CD8-positive, alpha-beta memory T cell (primary cell): ENCODE measurements at regions of chr12 and their contacts with region 1.

Region 1: GRCh38 chr12:121668750-121669520 is 519 bp downstream of the MORN3 start:
- DNase-seq: peak; percentile 24 to 70 (median 32)
- H3K4me3 ChIP-seq: no peak overlapping the region
- H3K4me3 Mint-ChIP-seq: peak overlapping the region in 4 of 7 donors; percentile 28 to 77 (median 52)
- H3K27ac ChIP-seq: no peak overlapping the region
- H3K27ac Mint-ChIP-seq: peak overlapping the region; percentile 68 to 100 (median 84)
- H3K4me1 ChIP-seq: peaks cover 69% of the 10 kb centered on the region
- H3K4me1 Mint-ChIP-seq: peaks cover 51 to 72% (median 59%) of the 10 kb centered on the region in 3 donors
- H3K27me3 ChIP-seq: no peaks in the 10 kb centered on the region
- H3K27me3 Mint-ChIP-seq: peaks cover 0 to 13% of the 10 kb centered on the region in 2 donors

Region 2: DNA sequence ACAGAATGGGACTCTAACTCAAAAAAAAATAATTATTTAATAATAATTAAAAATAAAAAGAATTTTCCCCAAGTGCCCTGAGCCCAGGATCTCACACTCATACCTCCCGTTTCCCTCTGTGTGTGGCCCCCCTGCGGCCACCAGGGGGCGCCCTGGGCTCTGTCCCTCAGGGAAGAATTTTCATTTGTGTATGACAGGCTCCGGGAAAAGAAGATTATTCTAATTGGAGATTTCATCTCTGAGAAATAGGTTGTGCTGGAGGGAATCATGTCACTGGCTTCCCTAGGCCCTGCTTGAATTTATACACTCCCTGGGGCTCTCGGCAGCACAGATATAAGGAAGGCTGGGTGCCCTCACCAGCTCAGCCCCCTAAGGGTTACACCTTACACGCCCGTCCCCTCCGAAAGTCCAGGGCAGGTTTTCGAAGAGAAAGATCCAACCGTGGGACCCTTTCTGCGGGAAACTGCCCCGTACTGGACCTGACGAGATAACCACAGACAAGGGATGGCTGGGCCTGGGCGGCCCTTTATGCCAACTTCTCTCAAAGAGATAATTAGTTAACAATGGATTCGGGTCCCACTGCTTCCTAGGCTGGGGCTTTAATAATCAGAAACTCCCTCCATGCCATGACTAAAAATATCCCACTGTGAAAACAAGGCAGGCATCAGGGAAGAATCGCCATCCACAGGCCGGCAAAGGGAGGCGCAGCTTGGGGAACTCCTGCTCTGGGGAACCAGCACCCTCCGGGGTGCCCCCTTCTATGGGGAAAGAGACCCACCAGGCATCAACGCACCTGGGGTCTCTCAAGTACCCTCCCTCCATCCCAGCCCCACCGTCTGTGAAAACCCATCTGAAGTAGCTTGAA is 168.8 kb before region 1 on chr12:
- CTCF ChIA-PET with region 1: interaction called, 13 read pairs
- POLR2A ChIA-PET with region 1: no interaction called
- DNase-seq: peak; percentile 61 to 81 (median 67)
- H3K4me3 ChIP-seq: no peak overlapping the region
- H3K4me3 Mint-ChIP-seq: no peak overlapping the region
- H3K27ac ChIP-seq: no peak overlapping the region
- H3K27ac Mint-ChIP-seq: peak overlapping the region in 4 of 8 donors; percentile 19 to 94 (median 73)
- H3K4me1 ChIP-seq: peaks cover 10% of the 10 kb centered on the region
- H3K4me1 Mint-ChIP-seq: peaks cover 28 to 55% (median 32%) of the 10 kb centered on the region in 3 donors
- H3K27me3 ChIP-seq: no peaks in the 10 kb centered on the region
- H3K27me3 Mint-ChIP-seq: no peaks in the 10 kb centered on the region

Region 3: DNA sequence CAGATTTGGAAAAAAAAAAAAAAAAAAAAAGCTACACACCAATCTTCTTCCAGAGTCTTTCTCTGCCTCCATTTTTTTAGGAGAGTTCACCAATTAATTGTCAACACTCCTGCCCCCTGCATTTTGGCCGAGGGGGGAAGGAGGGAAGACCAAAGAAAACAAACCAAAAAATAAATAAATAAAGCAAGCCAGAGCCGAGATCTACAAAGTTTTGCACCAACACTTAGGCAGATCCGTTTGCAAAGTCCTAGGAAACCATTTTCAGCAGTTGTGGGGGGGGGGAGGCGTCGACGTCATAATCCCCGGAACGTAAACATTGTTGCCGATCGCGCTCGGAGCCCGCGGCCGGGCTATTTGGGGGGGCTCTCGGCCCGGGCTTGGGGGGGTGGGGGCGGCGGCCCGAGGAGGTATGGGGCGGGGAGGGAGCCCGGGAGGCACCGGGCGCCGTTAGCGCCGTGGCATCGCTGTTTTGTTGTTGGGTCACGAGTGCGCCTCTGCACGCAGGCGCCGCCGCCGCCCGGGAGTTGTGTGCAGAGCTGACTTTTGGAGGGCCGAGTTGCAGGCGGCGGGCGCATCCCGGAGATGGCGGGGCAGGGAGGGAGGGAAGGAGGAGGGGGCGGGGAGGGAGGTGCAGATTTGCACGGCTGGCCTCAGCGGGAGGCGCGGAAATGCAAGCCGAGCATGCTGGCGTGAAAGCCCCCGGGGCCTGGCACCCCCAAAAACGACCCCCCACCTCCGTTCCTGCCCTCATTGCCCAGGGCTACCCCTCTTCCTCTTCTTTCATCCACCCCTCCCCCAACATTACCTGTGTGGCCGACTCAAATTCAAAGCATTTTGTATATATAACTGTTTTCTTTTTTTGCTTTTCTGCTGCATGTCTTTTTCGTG is 88.7 kb before region 1 on chr12:
- CTCF ChIA-PET with region 1: interaction called, 11 read pairs
- POLR2A ChIA-PET with region 1: interaction called, 24 read pairs
- DNase-seq: peak; percentile 72 to 89 (median 73)
- H3K4me3 ChIP-seq: peak overlapping the region; percentile 97
- H3K4me3 Mint-ChIP-seq: peak overlapping the region; percentile 95 to 99 (median 98)
- H3K27ac ChIP-seq: peak overlapping the region; percentile 93
- H3K27ac Mint-ChIP-seq: peak overlapping the region; percentile 97 to 100 (median 99)
- H3K4me1 ChIP-seq: peaks cover 41% of the 10 kb centered on the region
- H3K4me1 Mint-ChIP-seq: peaks cover 41 to 73% (median 48%) of the 10 kb centered on the region in 3 donors
- H3K27me3 ChIP-seq: no peaks in the 10 kb centered on the region
- H3K27me3 Mint-ChIP-seq: no peaks in the 10 kb centered on the region

Region 4: DNA sequence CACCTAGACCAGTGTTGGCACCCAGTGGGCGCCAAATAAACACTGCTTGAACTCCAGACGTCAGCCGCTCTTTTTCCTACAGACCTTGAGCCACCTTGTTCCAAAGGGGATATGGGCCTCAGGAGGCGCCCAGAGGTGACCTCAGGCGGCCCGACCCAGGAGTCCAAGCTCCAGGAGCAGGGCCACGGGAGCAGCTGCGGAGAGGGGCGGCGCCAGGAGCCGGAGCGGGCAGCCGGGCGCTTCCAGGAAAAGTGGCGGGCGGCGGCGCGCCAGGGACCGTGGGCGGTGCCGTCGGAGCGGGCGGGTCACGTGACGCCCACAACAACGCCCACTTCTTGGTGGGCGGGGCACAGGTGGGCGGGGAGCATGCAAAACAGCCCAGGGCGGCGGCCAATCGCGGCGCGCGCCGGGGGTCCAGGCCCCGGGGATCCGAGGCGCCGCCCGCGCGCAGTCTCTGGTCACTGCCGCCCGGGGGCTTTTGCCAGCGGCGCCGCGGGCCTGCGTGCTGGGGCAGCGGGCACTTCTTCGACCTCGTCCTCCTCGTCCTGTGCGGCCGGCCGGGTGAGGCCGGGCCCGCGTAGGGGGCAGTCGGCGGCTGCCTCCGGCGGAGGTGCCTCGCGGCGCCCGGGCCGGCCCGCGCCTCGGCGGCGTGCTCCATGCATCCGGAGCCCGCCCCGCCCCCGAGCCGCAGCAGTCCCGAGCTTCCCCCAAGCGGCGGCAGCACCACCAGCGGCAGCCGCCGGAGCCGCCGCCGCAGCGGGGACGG is 42.7 kb before region 1 on chr12 and contains the start of gene ORAI1:
- CTCF ChIA-PET with region 1: interaction called, 53 read pairs
- POLR2A ChIA-PET with region 1: interaction called, 54 read pairs
- DNase-seq: peak; percentile 95 to 98 (median 96)
- H3K4me3 ChIP-seq: peak within 1 kb of the TSS; percentile 95
- H3K4me3 Mint-ChIP-seq: peak within 1 kb of the TSS; percentile 95 to 100 (median 97)
- H3K27ac ChIP-seq: peak within 1 kb of the TSS; percentile 95
- H3K27ac Mint-ChIP-seq: peak within 1 kb of the TSS; percentile 98 to 99 (median 98)
- H3K4me1 ChIP-seq: peaks cover 47% of the 10 kb centered on the region
- H3K4me1 Mint-ChIP-seq: peaks cover 43 to 57% (median 43%) of the 10 kb centered on the region in 3 donors
- H3K27me3 ChIP-seq: no peaks in the 10 kb centered on the region
- H3K27me3 Mint-ChIP-seq: peaks cover 0 to 3% of the 10 kb centered on the region in 2 donors
- total RNA-seq, gene ORAI1: 61.9 to 64.7 TPM

Region 5: DNA sequence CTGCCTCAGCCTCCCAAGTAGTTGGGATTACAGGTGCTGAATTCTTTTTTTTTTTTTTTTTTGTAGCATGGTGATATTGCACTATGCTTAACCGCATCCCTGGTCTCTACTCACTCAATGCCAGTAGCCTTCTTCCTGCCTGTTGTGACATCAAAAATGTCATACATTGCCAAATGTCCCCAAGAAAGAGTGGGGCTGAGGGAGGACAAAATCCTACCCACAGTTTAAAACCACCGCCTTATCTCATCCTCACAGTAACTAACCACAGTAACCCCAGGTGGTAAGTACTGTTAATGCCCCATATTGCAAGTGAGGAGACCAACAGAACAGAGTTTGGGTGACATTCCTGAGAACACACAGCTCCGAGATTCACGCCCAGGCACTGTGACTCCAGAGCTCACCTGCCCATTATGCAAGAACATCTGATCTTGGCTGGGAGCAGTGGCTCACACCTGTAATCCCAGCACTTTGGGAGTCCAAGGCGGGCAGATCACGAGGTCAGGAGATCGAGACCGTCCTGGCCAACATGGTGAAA is 19.0 kb before region 1 on chr12:
- CTCF ChIA-PET with region 1: interaction called, 12 read pairs
- POLR2A ChIA-PET with region 1: interaction called, 5 read pairs
- DNase-seq: peak in 1 of 5 donors; percentile 69
- H3K4me3 ChIP-seq: no peak overlapping the region
- H3K4me3 Mint-ChIP-seq: peak overlapping the region; percentile 22 to 80 (median 61)
- H3K27ac ChIP-seq: no peak overlapping the region
- H3K27ac Mint-ChIP-seq: peak overlapping the region; percentile 44 to 92 (median 83)
- H3K4me1 ChIP-seq: peaks cover 18% of the 10 kb centered on the region
- H3K4me1 Mint-ChIP-seq: peaks cover 24 to 41% (median 41%) of the 10 kb centered on the region in 3 donors
- H3K27me3 ChIP-seq: no peaks in the 10 kb centered on the region
- H3K27me3 Mint-ChIP-seq: peaks cover 0 to 2% of the 10 kb centered on the region in 2 donors

Region 6: GRCh38 chr12:121678716-121679580 is 10.0 kb after region 1 on chr12:
- CTCF ChIA-PET with region 1: interaction called, 57 read pairs
- POLR2A ChIA-PET with region 1: no interaction called
- DNase-seq: no peak
- H3K4me3 ChIP-seq: no peak overlapping the region
- H3K4me3 Mint-ChIP-seq: peak overlapping the region in 1 of 7 donors; percentile 24
- H3K27ac ChIP-seq: no peak overlapping the region
- H3K27ac Mint-ChIP-seq: peak overlapping the region in 6 of 8 donors; percentile 7 to 88 (median 59)
- H3K4me1 ChIP-seq: peaks cover 3% of the 10 kb centered on the region
- H3K4me1 Mint-ChIP-seq: peaks cover 6 to 11% (median 9%) of the 10 kb centered on the region in 3 donors
- H3K27me3 ChIP-seq: no peaks in the 10 kb centered on the region
- H3K27me3 Mint-ChIP-seq: peaks cover 0 to 4% of the 10 kb centered on the region in 2 donors